T-cell (primary cell): ENCODE measurements at regions of chr13 and their contacts with region 1.

Region 1: DNA sequence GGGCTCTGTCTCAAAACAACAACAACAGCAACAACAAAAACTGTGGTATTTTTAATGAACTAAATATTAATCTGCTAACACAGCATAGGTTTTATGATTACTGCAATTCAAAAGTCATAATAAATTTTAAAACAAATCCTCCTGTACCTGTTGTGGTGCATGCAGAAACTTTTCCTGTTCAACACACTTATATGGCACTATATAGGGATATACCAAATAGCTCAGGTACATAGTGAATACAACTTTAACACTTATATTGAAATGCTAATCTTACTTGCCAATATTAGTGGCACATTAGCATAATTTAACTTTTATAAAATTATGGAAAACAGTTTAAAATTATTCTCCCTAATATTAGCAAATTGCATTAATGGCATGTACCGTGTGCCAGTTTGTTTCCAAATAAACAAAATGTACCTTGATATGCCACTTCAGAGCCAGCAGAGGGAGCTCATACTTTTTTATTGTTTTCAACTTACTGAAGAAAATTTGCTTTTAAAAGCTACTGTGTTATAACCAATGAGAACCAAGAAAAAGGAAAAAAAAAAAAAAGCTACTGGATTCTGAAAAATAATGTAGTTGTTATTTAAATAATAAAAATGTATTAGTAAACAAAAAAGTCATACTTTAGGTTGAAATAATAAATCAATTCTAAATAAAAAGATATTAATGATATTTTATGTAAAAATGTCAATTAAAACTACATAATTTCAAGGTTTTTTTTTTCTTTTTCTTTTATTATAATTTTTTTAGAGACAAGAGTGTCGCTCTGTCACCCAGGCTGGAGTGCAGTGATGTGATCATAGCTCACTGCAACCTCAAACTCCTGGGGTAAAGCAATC is 18.0 kb upstream of the RBM26 start:
- DNase-seq: peak in 2 of 35 experiments; percentile 6 to 71
- ATAC-seq: peak in 3 of 4 experiments; percentile 48 to 61 (median 57)
- H3K4me3 ChIP-seq: no peak overlapping the region
- H3K4me3 Mint-ChIP-seq: no peak overlapping the region
- H3K27ac ChIP-seq: no peak overlapping the region
- H3K27ac Mint-ChIP-seq: no peak overlapping the region
- H3K4me1 ChIP-seq: no peaks in the 10 kb centered on the region
- H3K4me1 Mint-ChIP-seq: no peaks in the 10 kb centered on the region
- H3K27me3 ChIP-seq: no peaks in the 10 kb centered on the region
- H3K27me3 Mint-ChIP-seq: no peaks in the 10 kb centered on the region

Region 2: GRCh38 chr13:79405829-79406596 is 18.0 kb before region 1 on chr13 and contains the start of gene RBM26:
- CTCF ChIA-PET with region 1: interaction called, 5 to 22 read pairs
- POLR2A ChIA-PET with region 1: interaction called in 1 of 2 experiments, 4 read pairs
- DNase-seq: peak; percentile 84 to 98 (median 91)
- ATAC-seq: peak; percentile 89 to 91 (median 90)
- H3K4me3 ChIP-seq: peak within 1 kb of the TSS; percentile 65 to 98
- H3K4me3 Mint-ChIP-seq: peak within 1 kb of the TSS in 1 of 3 donors; percentile 94
- H3K27ac ChIP-seq: peak within 1 kb of the TSS; percentile 90
- H3K27ac Mint-ChIP-seq: peak within 1 kb of the TSS; percentile 95 to 99
- H3K4me1 ChIP-seq: peaks cover 18 to 45% of the 10 kb centered on the region in 2 experiments
- H3K4me1 Mint-ChIP-seq: peaks cover 17 to 33% (median 24%) of the 10 kb centered on the region in 3 donors
- H3K27me3 ChIP-seq: no peaks in the 10 kb centered on the region
- H3K27me3 Mint-ChIP-seq: no peaks in the 10 kb centered on the region
- total RNA-seq, gene RBM26: 76.7 to 97.8 (median 77.9) TPM

Region 3: GRCh38 chr13:79480954-79481684 is 57.1 kb after region 1 on chr13 and contains the start of gene NDFIP2:
- CTCF ChIA-PET with region 1: interaction called, 5 to 34 read pairs
- POLR2A ChIA-PET with region 1: interaction called in 1 of 2 experiments, 4 read pairs
- DNase-seq: peak; percentile 63 to 89 (median 73)
- ATAC-seq: peak; percentile 83 to 84 (median 84)
- H3K4me3 ChIP-seq: peak within 1 kb of the TSS; percentile 82 to 88
- H3K4me3 Mint-ChIP-seq: peak within 1 kb of the TSS; percentile 84 to 96 (median 93)
- H3K27ac ChIP-seq: peak within 1 kb of the TSS; percentile 32
- H3K27ac Mint-ChIP-seq: peak within 1 kb of the TSS; percentile 58 to 71
- H3K4me1 ChIP-seq: peaks cover 12% of the 10 kb centered on the region in 2 experiments
- H3K4me1 Mint-ChIP-seq: peaks cover 45 to 49% (median 46%) of the 10 kb centered on the region in 3 donors
- H3K27me3 ChIP-seq: peaks cover 0 to 3% of the 10 kb centered on the region in 2 experiments
- H3K27me3 Mint-ChIP-seq: no peaks in the 10 kb centered on the region
- total RNA-seq, gene NDFIP2: 3.1 to 6.8 (median 5.0) TPM

Region 4: GRCh38 chr13:79534596-79534995 is 110.6 kb after region 1 on chr13:
- CTCF ChIA-PET with region 1: interaction called, 84 to 272 read pairs
- POLR2A ChIA-PET with region 1: interaction called, 3 to 4 read pairs
- DNase-seq: no peak
- ATAC-seq: no peak
- H3K4me3 ChIP-seq: no peak overlapping the region
- H3K4me3 Mint-ChIP-seq: no peak overlapping the region
- H3K27ac ChIP-seq: no peak overlapping the region
- H3K27ac Mint-ChIP-seq: no peak overlapping the region
- H3K4me1 ChIP-seq: no peaks in the 10 kb centered on the region
- H3K4me1 Mint-ChIP-seq: peaks cover 1 to 10% (median 7%) of the 10 kb centered on the region in 3 donors
- H3K27me3 ChIP-seq: no peaks in the 10 kb centered on the region
- H3K27me3 Mint-ChIP-seq: no peaks in the 10 kb centered on the region

Region 5: GRCh38 chr13:79901336-79901735 is 477.3 kb after region 1 on chr13:
- CTCF ChIA-PET with region 1: no interaction called
- POLR2A ChIA-PET with region 1: no interaction called
- DNase-seq: no peak
- ATAC-seq: no peak
- H3K4me3 ChIP-seq: no peak overlapping the region
- H3K4me3 Mint-ChIP-seq: no peak overlapping the region
- H3K27ac ChIP-seq: no peak overlapping the region
- H3K27ac Mint-ChIP-seq: no peak overlapping the region
- H3K4me1 ChIP-seq: no peaks in the 10 kb centered on the region
- H3K4me1 Mint-ChIP-seq: no peaks in the 10 kb centered on the region
- H3K27me3 ChIP-seq: no peaks in the 10 kb centered on the region
- H3K27me3 Mint-ChIP-seq: no peaks in the 10 kb centered on the region